GM12878 (cell line): ENCODE measurements at regions of chr6 and their contacts with region 1.

Region 1: DNA sequence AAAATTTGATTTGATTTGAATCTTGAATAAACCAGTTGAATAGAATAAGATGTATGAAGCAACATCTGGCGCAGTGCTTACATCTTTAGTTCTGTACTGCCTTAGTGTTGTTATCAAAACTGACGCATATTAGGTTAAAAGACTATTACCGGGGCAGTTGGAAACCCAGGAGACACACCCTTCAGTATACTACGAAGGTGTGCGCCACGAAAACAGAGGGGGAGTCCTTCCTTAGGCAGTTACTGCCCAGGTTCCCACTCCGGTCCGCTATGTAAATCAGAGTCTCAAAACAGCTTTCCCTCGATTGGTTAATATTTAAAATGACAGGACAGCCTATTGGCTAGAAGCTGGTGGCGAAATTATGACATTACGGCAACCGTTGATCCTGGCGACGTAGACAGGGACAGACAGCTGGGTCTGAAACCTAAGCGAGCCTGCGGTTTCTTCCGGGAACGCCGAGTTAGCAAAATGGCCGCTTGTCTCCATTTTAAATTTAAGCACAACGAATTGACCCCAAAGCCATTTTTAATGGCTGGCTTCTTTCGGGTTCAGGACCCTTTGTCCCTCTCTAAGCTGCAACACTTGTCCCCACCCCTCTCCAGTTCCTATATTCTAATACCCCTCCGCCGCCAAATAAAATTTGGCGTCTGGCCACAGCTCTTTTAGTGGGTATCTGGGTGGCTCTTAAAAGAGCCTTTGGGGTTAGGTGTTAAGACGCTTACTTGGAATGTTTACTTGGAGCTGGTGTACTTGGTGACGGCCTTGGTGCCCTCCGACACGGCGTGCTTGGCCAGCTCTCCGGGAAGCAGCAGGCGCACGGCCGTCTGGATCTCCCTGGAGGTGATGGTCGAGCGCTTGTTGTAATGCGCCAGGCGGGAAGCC is 35.8 kb downstream of the HFE start:
- DNase-seq: peak; percentile 99
- ATAC-seq: peak; percentile 71
- H3K4me3 ChIP-seq: peak overlapping the region; percentile 65
- H3K27ac ChIP-seq: peak overlapping the region; percentile 95
- H3K4me1 ChIP-seq: peaks cover 3% of the 10 kb centered on the region; the same call in 1 of the 2 replicates
- H3K27me3 ChIP-seq: no peaks in the 10 kb centered on the region
- CTCF ChIP-seq: no peak
- EP300 ChIP-seq: peak; percentile 85 to 93; a peak in 3 of 4 replicates
- POLR2A ChIP-seq: peak; percentile 86
- RAD21 ChIP-seq: no peak

Region 2: GRCh38 chr6:25913741-25914140 is 209.3 kb before region 1 on chr6:
- CTCF ChIA-PET with region 1: no interaction called
- POLR2A ChIA-PET with region 1: no interaction called
- RAD21 ChIA-PET with region 1: no interaction called
- SMC1A ChIA-PET with region 1: no interaction called
- in situ Hi-C with region 1: no loop called
- intact Hi-C with region 1: no loop called
- DNase-seq: no peak
- ATAC-seq: no peak
- H3K4me3 ChIP-seq: no peak overlapping the region
- H3K27ac ChIP-seq: no peak overlapping the region
- H3K4me1 ChIP-seq: no peaks in the 10 kb centered on the region
- H3K27me3 ChIP-seq: no peaks in the 10 kb centered on the region; a peak in 1 of 4 replicates
- CTCF ChIP-seq: no peak
- EP300 ChIP-seq: no peak
- POLR2A ChIP-seq: no peak
- RAD21 ChIP-seq: no peak

Region 3: DNA sequence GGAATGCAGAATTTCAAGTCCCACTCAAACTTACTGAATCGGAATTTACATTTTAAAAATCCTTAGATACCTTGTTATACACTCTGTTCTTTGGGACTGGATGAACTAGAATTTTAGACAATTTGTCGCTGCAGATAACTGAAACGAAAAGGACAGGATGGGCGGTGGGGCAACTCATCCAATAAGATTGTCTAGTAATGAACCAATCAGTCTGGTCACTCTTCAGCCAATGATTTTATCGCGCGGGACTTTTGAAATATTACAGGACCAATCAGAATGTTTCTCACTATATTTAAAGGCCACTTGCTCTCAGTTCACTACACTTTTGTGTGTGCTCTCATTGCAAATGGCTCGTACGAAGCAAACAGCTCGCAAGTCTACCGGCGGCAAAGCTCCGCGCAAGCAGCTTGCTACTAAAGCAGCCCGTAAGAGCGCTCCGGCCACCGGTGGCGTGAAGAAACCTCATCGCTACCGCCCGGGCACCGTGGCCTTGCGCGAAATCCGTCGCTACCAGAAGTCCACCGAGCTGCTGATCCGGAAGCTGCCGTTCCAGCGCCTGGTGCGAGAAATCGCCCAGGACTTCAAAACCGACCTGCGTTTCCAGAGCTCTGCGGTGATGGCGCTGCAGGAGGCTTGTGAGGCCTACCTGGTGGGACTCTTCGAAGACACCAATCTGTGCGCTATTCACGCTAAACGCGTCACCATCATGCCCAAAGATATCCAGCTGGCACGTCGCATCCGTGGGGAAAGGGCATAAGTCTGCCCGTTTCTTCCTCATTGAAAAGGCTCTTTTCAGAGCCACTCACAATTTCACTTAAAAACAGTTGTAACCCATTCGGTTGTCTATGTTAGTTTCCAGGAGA is 77.7 kb before region 1 on chr6:
- CTCF ChIA-PET with region 1: no interaction called
- POLR2A ChIA-PET with region 1: interaction called, 14 read pairs
- RAD21 ChIA-PET with region 1: interaction called, 3 read pairs
- SMC1A ChIA-PET with region 1: interaction called, 5 read pairs
- in situ Hi-C with region 1: no loop called
- intact Hi-C with region 1: no loop called
- DNase-seq: peak; percentile 99
- ATAC-seq: peak; percentile 79
- H3K4me3 ChIP-seq: peak overlapping the region; percentile 64
- H3K27ac ChIP-seq: peak overlapping the region; percentile 97
- H3K4me1 ChIP-seq: peaks cover 21% of the 10 kb centered on the region
- H3K27me3 ChIP-seq: no peaks in the 10 kb centered on the region
- CTCF ChIP-seq: 0 out of 6 replicates have a peak, but pooled peaks of 2 of the 3 experiments have one; percentile 13 to 19
- EP300 ChIP-seq: no peak
- POLR2A ChIP-seq: peak; percentile 98
- RAD21 ChIP-seq: no peak

Region 4: GRCh38 chr6:26103770-26104456 is 19.1 kb before region 1 on chr6:
- CTCF ChIA-PET with region 1: interaction called, 5 read pairs
- POLR2A ChIA-PET with region 1: interaction called, 22 read pairs
- RAD21 ChIA-PET with region 1: interaction called, 5 read pairs
- SMC1A ChIA-PET with region 1: interaction called, 14 read pairs
- in situ Hi-C with region 1: no loop called
- intact Hi-C with region 1: loop called (anchors 1 kb)
- DNase-seq: peak; percentile 99
- ATAC-seq: peak; percentile 95
- H3K4me3 ChIP-seq: peak overlapping the region; percentile 63
- H3K27ac ChIP-seq: peak overlapping the region; percentile 79
- H3K4me1 ChIP-seq: no peaks in the 10 kb centered on the region
- H3K27me3 ChIP-seq: no peaks in the 10 kb centered on the region
- CTCF ChIP-seq: peak; percentile 42 to 47 (median 45); a peak in 4 of 6 replicates
- EP300 ChIP-seq: peak; percentile 31 to 93
- POLR2A ChIP-seq: peak; percentile 97
- RAD21 ChIP-seq: peak; percentile 46

Region 5: DNA sequence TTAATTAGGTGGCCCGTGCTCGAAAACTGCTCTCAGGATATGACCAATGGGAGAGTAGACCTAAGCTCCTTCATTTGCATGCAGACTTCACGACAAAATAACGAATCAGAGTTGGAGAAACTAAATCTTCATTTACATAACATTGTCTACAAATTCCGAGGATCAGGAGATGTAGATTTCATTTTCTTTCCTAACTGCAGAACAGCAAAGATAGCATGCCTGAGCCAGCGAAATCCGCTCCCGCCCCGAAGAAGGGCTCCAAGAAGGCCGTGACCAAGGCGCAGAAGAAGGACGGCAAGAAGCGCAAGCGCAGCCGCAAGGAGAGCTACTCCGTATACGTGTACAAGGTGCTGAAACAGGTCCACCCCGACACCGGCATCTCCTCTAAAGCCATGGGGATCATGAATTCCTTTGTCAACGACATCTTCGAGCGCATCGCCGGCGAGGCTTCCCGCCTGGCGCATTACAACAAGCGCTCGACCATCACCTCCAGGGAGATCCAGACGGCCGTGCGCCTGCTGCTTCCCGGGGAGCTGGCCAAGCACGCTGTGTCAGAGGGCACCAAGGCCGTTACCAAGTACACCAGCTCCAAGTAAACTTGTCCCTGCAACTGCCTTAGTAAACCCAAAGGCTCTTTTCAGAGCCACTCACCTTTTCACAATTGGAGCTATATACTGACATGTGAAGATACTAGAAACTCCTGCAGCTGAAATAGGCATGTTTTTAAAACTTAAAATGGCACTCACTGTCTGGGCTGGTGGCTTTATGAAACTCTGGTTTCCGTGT is 60.7 kb after region 1 on chr6:
- CTCF ChIA-PET with region 1: no interaction called
- POLR2A ChIA-PET with region 1: interaction called, 14 read pairs
- RAD21 ChIA-PET with region 1: interaction called, 4 read pairs
- SMC1A ChIA-PET with region 1: interaction called, 5 read pairs
- in situ Hi-C with region 1: no loop called
- intact Hi-C with region 1: no loop called
- DNase-seq: peak; percentile 84
- ATAC-seq: peak; percentile 71
- H3K4me3 ChIP-seq: peak overlapping the region; percentile 59
- H3K27ac ChIP-seq: peak overlapping the region; percentile 78
- H3K4me1 ChIP-seq: peaks cover 23% of the 10 kb centered on the region
- H3K27me3 ChIP-seq: no peaks in the 10 kb centered on the region
- CTCF ChIP-seq: no peak
- EP300 ChIP-seq: no peak
- POLR2A ChIP-seq: peak; percentile 85
- RAD21 ChIP-seq: no peak

Region 6: DNA sequence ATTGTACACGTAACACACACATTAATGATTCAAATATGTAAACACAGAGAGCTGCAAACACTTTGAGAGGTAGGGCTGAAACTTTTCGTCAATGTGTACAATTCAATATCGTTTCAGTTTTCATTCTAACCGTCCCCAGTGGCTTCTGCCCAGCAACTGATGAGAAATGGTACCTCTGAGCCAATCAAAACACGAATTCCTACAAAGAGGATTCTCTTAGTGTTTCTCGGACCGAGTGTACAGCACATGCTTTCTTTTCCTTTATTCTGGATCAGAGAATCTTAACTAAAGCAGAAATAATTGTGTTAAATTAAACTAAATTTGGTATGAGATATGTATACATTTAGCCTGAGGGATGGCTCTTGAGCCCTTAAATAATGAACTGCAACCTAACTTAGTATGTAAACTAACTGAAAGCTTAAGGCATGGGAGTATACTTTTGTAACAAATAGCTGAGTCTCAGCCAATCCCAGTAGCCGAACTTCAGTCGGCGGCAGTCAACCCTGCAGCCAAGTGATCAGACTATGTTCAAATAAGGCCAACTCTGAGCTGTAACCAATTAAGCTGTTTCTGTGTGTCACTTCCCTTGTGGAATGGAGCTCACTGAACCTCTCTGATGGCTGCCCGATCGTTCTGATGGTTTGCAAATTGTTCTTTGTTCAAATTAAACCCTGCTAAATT is 350.9 kb after region 1 on chr6:
- CTCF ChIA-PET with region 1: no interaction called
- POLR2A ChIA-PET with region 1: no interaction called
- RAD21 ChIA-PET with region 1: no interaction called
- SMC1A ChIA-PET with region 1: no interaction called
- in situ Hi-C with region 1: no loop called
- intact Hi-C with region 1: no loop called
- DNase-seq: peak; percentile 97
- ATAC-seq: peak; percentile 95
- H3K4me3 ChIP-seq: peak overlapping the region; percentile 77
- H3K27ac ChIP-seq: peak overlapping the region; percentile 100
- H3K4me1 ChIP-seq: peaks cover 29% of the 10 kb centered on the region
- H3K27me3 ChIP-seq: no peaks in the 10 kb centered on the region
- CTCF ChIP-seq: no peak
- EP300 ChIP-seq: no peak; a peak in 1 of 4 replicates
- POLR2A ChIP-seq: peak; percentile 87
- RAD21 ChIP-seq: no peak

Region 7: DNA sequence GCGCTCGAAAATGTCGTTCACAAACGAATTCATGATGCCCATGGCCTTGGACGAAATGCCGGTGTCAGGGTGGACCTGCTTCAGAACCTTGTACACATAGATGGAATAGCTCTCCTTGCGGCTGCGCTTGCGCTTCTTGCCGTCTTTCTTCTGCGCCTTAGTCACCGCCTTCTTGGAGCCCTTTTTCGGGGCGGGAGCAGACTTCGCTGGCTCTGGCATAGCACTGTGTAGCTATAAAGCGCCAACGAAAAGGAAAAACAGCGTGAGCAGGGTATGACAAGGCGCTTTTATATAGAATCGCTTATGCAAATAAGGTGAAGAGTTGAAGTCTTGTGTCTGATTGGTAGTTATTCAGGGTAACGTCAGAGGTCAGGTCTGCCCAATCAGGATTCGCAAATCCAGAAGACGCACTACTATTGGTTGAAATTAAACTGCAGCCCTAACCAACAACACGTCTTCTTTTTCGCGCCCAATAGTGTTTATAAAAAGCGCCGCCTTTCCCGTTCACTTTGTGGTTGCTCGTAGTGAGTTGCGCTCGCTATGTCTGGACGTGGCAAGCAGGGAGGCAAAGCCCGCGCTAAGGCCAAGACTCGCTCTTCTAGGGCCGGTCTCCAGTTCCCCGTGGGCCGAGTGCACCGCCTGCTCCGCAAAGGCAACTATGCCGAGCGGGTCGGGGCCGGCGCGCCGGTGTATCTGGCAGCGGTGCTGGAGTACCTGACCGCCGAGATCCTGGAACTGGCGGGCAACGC is 1009.7 kb after region 1 on chr6:
- CTCF ChIA-PET with region 1: no interaction called
- POLR2A ChIA-PET with region 1: interaction called, 4 read pairs
- RAD21 ChIA-PET with region 1: no interaction called
- SMC1A ChIA-PET with region 1: no interaction called
- in situ Hi-C with region 1: loop called (anchors 5 kb)
- intact Hi-C with region 1: loop called (anchors 2 kb)
- DNase-seq: peak; percentile 100
- ATAC-seq: peak; percentile 72
- H3K4me3 ChIP-seq: peak overlapping the region; percentile 65
- H3K27ac ChIP-seq: peak overlapping the region; percentile 94
- H3K4me1 ChIP-seq: peaks cover 22% of the 10 kb centered on the region
- H3K27me3 ChIP-seq: no peaks in the 10 kb centered on the region
- CTCF ChIP-seq: no peak
- EP300 ChIP-seq: peak in 1 of 2 experiments; percentile 20; a peak in 1 of 4 replicates
- POLR2A ChIP-seq: peak; percentile 93
- RAD21 ChIP-seq: no peak

Region 8: DNA sequence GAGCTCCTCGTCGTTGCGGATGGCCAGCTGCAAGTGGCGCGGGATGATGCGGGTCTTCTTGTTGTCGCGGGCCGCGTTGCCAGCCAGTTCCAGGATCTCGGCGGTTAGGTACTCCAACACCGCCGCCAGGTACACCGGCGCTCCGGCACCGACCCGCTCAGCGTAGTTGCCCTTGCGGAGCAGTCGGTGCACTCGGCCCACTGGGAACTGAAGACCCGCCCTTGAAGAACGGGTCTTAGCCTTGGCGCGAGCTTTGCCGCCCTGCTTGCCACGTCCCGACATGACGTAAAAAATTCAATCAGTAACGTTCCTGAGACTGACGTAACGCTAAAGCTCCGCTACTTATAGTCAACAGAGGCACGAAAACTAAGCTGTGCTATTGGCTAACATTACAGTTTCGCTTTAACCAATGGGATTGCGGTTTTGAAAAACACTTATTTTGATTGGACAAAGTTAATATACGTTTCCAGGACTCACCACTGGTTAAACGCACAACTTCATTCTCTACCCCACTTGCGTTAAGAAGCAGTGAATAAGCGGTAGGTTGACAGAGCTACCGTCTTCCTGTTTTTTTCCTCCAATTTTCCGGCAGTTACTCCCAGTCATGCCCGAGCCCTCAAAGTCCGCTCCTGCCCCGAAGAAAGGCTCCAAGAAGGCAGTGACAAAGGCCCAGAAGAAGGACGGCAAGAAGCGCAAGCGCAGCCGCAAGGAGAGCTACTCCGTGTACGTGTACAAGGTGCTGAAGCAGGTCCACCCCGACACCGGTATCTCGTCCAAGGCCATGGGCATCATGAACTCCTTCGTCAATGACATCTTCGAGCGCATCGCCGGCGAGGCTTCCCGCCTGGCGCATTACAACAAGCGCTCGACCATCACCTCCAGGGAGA is 1715.3 kb after region 1 on chr6:
- CTCF ChIA-PET with region 1: no interaction called
- POLR2A ChIA-PET with region 1: interaction called, 5 read pairs
- RAD21 ChIA-PET with region 1: no interaction called
- SMC1A ChIA-PET with region 1: no interaction called
- in situ Hi-C with region 1: loop called (anchors 10 kb)
- intact Hi-C with region 1: no loop called
- DNase-seq: peak; percentile 100
- ATAC-seq: peak; percentile 81
- H3K4me3 ChIP-seq: peak overlapping the region; percentile 87
- H3K27ac ChIP-seq: peak overlapping the region; percentile 93
- H3K4me1 ChIP-seq: no peaks in the 10 kb centered on the region
- H3K27me3 ChIP-seq: no peaks in the 10 kb centered on the region
- CTCF ChIP-seq: no peak
- EP300 ChIP-seq: 0 out of 4 replicates have a peak, but pooled peaks of 1 of the 2 experiments have one; percentile 3
- POLR2A ChIP-seq: peak; percentile 81
- RAD21 ChIP-seq: no peak